ENCODE measurements at regions of chr10 and their contacts with region 1.

Region 1: GRCh38 chr10:60230892-60231291 is 158.8 kb downstream of the ANK3 start:
- DNase-seq: no peak
- H3K4me3 ChIP-seq: no peak overlapping the region
- H3K27ac ChIP-seq: no peak overlapping the region
- H3K4me1 ChIP-seq: no peaks in the 10 kb centered on the region
- H3K27me3 ChIP-seq: no peaks in the 10 kb centered on the region
- CTCF ChIP-seq: no peak
- EP300 ChIP-seq: no peak
- POLR2A ChIP-seq: no peak

Region 2: GRCh38 chr10:60260321-60260720 is 29.4 kb after region 1 on chr10:
- intact Hi-C with region 1: loop called in 1 of 4 experiments (anchors 2 kb)
- DNase-seq: no peak
- H3K4me3 ChIP-seq: no peak overlapping the region
- H3K27ac ChIP-seq: no peak overlapping the region
- H3K4me1 ChIP-seq: no peaks in the 10 kb centered on the region
- H3K27me3 ChIP-seq: no peaks in the 10 kb centered on the region
- CTCF ChIP-seq: no peak
- EP300 ChIP-seq: no peak
- POLR2A ChIP-seq: no peak

Region 3: GRCh38 chr10:60372436-60372835 is 141.5 kb after region 1 on chr10:
- intact Hi-C with region 1: no loop called
- DNase-seq: no peak
- H3K4me3 ChIP-seq: no peak overlapping the region
- H3K27ac ChIP-seq: no peak overlapping the region
- H3K4me1 ChIP-seq: peaks cover 2% of the 10 kb centered on the region
- H3K27me3 ChIP-seq: no peaks in the 10 kb centered on the region
- CTCF ChIP-seq: no peak
- EP300 ChIP-seq: no peak
- POLR2A ChIP-seq: no peak

Measured in ovary (tissue), 10 donors.